Naive thymus-derived CD4-positive, alpha-beta T cell (primary cell): ENCODE measurements at regions of chr5 and their contacts with region 1.

Region 1: GRCh38 chr5:173094012-173094661 is 38.0 kb downstream of the CREBRF start:
- DNase-seq: no peak
- ATAC-seq: no peak
- H3K4me3 ChIP-seq: no peak overlapping the region
- H3K4me3 Mint-ChIP-seq: no peak overlapping the region
- H3K27ac ChIP-seq: no peak overlapping the region
- H3K27ac Mint-ChIP-seq: peak overlapping the region in 6 of 9 donors; percentile 6 to 44 (median 24)
- H3K4me1 ChIP-seq: peaks cover 0 to 3% of the 10 kb centered on the region in 2 donors
- H3K4me1 Mint-ChIP-seq: peaks cover 0 to 78% (median 67%) of the 10 kb centered on the region in 7 donors
- H3K27me3 ChIP-seq: no peaks in the 10 kb centered on the region
- H3K27me3 Mint-ChIP-seq: no peaks in the 10 kb centered on the region

Region 2: DNA sequence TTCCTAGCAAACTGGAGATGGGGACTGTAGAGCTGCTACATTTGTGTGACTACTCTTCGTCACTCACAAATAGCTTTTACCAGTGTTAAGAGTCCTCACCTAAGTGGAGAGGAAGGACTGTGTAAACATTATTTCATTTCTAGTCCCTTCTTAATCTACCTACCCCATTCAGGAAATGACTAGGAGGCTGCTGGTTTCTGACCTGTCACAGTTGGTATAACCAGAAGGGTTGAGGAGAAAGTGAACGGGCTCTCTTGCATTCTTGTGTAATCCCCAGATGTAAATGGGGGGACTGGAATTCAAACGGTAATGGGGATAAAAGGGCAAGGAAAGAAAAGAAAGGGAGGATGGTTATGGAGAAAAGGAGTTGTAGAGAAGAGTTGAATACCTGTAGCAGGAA is 14.8 kb after region 1 on chr5:
- CTCF ChIA-PET with region 1: no interaction called
- POLR2A ChIA-PET with region 1: no interaction called
- intact Hi-C with region 1: loop called in 1 of 2 experiments (anchors 2 kb)
- DNase-seq: no peak
- ATAC-seq: no peak
- H3K4me3 ChIP-seq: no peak overlapping the region
- H3K4me3 Mint-ChIP-seq: peak overlapping the region in 1 of 10 donors; percentile 56
- H3K27ac ChIP-seq: no peak overlapping the region
- H3K27ac Mint-ChIP-seq: peak overlapping the region in 3 of 9 donors; percentile 48 to 80 (median 76)
- H3K4me1 ChIP-seq: no peaks in the 10 kb centered on the region
- H3K4me1 Mint-ChIP-seq: peaks cover 9 to 23% (median 19%) of the 10 kb centered on the region in 7 donors
- H3K27me3 ChIP-seq: no peaks in the 10 kb centered on the region
- H3K27me3 Mint-ChIP-seq: no peaks in the 10 kb centered on the region

Region 3: DNA sequence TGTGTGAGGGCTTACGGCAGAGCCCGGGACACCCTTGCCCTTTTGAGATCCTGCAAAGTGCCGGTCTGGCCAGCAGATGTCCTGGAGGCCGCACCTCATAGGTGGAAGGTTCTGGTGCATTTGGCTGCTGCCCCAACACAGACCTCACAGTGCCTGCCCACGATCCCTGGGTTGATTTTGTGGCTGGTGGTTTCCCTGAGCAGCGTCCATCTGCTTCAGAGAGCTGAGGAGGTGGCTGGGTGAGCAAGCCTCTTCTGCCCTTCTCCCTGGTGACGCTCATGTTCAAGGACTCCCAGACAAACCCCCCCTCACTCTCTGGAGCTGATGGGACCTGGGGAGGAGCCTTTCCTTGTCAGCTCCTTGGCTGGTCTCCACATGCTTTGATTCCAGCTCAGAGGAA is 69.1 kb after region 1 on chr5:
- CTCF ChIA-PET with region 1: no interaction called
- POLR2A ChIA-PET with region 1: no interaction called
- intact Hi-C with region 1: no loop called
- DNase-seq: no peak
- ATAC-seq: no peak
- H3K4me3 ChIP-seq: no peak overlapping the region
- H3K4me3 Mint-ChIP-seq: no peak overlapping the region
- H3K27ac ChIP-seq: no peak overlapping the region
- H3K27ac Mint-ChIP-seq: no peak overlapping the region
- H3K4me1 ChIP-seq: no peaks in the 10 kb centered on the region
- H3K4me1 Mint-ChIP-seq: peaks cover 0 to 1% (median 0%) of the 10 kb centered on the region in 7 donors
- H3K27me3 ChIP-seq: no peaks in the 10 kb centered on the region
- H3K27me3 Mint-ChIP-seq: no peaks in the 10 kb centered on the region